ENCODE measurements at regions of chr5 and their contacts with region 1.

Region 1: DNA sequence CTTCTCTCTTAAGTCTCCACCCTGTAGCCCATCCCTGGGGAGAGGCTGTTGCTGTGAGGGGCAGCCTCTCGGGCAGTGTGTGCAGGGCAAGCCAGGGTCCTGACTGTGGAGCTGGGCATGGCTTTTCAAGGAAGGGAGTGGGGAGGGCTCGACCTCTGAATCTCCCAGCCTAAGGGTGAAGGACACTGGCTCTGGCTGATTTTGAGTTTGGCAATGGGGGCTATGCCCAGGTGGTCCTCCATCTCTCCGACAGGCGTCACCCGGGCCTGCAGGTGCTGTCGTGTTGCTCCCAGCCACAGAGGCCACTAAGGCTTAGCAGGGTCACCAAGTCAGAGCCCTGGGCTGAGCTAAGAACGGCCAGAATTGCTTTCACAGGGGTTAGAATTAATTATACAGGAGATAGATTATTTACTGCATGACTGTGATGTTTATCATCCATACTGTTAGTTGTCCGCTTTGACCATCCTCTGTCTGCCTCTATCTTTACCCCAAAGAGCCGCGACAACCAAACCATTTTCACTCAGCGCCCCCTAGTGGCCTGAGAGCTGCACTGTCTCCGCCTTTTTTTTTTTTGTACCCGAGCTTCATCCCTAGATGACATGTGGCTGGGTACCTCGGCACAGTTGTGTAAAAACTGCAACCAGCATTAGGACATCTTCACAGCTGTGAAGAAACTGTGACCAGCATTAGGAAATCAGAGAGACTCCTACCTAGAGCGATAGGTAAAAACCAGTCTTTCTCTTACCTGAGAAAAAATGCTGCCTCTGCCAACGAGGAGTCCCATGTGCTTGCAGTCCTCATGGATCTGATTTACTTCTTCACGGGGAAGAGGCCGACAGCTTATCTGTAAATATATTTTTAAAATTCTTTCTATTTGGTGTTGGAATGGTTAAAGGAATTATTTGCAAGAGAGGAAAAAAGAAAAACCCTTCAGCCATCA is 44.5 kb downstream of the AGXT2 start:
- DNase-seq: peak; percentile 56 to 81
- H3K4me3 ChIP-seq: no peak overlapping the region
- H3K27ac ChIP-seq: no peak overlapping the region
- H3K4me1 ChIP-seq: no peaks in the 10 kb centered on the region
- H3K27me3 ChIP-seq: peaks cover 48% of the 10 kb centered on the region
- CTCF ChIP-seq: peak; percentile 99

Region 2: GRCh38 chr5:34699155-34700077 is 303.9 kb before region 1 on chr5:
- CTCF ChIA-PET with region 1: interaction called, 14 read pairs
- POLR2A ChIA-PET with region 1: no interaction called
- intact Hi-C with region 1: no loop called
- DNase-seq: peak in 1 of 2 experiments; percentile 76
- H3K4me3 ChIP-seq: no peak overlapping the region
- H3K27ac ChIP-seq: peak overlapping the region; percentile 16; the same call in 1 of the 2 replicates
- H3K4me1 ChIP-seq: peaks cover 46% of the 10 kb centered on the region
- H3K27me3 ChIP-seq: no peaks in the 10 kb centered on the region
- CTCF ChIP-seq: no peak

Region 3: GRCh38 chr5:34898258-34898895 is 104.9 kb before region 1 on chr5:
- CTCF ChIA-PET with region 1: interaction called, 3 read pairs
- POLR2A ChIA-PET with region 1: no interaction called
- intact Hi-C with region 1: loop called (anchors 2 kb)
- DNase-seq: peak; percentile 71 to 84
- H3K4me3 ChIP-seq: no peak overlapping the region
- H3K27ac ChIP-seq: no peak overlapping the region
- H3K4me1 ChIP-seq: peaks cover 17% of the 10 kb centered on the region
- H3K27me3 ChIP-seq: no peaks in the 10 kb centered on the region
- CTCF ChIP-seq: peak; percentile 98

Region 4: GRCh38 chr5:34915139-34915855 is 88.0 kb before region 1 on chr5 and contains the starts of genes BRIX1 and RAD1:
- CTCF ChIA-PET with region 1: interaction called, 5 read pairs
- POLR2A ChIA-PET with region 1: no interaction called
- intact Hi-C with region 1: loop called (anchors 1 kb)
- DNase-seq: peak; percentile 95 to 100
- H3K4me3 ChIP-seq: peak within 1 kb of the TSS; percentile 81
- H3K27ac ChIP-seq: peak within 1 kb of the TSS; percentile 73
- H3K4me1 ChIP-seq: peaks cover 42% of the 10 kb centered on the region
- H3K27me3 ChIP-seq: no peaks in the 10 kb centered on the region
- CTCF ChIP-seq: 0 out of 2 replicates have a peak, but pooled peaks have one; percentile 39
- total RNA-seq, gene BRIX1: 71.9 and 73.4 TPM in 2 replicates
- total RNA-seq, gene RAD1: 43.8 and 63.0 TPM in 2 replicates

Measured in PC-9 (cell line).